Activated CD4-positive, alpha-beta memory T cell treated with anti-CD3 and anti-CD28 coated beads, Interleukin-2, amount 10 ng/mL, durations not matched to agents 7 days and 5 days (primary cell): ENCODE measurements at regions of chr3 and their contacts with region 1.

Region 1: DNA sequence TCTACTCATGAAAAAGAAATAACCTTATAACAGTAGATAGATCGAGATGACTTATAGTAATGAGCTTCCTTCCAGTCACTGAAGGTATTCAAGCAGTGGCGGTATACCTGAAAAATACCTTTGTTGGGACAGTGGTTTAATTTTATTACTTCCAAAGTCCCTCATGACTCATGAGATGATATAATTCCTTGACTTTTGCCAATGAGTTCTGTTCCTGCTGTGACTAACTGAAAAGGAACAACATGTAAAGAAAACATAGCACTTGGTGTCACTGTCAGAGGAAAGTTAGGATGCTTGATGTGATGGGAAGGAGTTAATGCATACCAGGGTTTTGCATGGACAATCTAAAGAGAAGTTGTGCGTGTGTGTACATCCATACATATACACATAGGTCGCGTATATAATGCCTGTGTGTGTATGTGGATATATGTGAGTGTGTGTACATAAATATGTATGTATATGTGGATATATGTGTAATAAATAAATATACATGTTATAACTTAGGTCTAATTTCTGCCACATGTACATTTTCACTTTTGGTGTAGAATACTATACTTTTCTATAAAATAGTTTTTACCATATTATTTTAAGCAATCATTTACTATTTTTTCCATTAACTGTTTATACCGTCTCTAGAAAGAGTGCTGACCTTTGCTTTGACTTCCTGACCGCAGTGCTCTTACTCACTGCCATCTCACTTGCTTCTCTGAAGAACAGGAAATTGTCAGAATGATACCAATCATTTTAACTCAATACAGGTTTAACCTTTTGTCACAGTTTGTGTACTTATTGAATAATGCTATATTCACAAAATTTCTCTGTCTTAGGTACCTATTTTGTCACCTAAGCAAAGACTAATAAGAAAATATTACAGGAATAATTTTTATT is 12.6 kb upstream of the PAK2 start:
- DNase-seq: peak; percentile 51
- H3K4me3 Mint-ChIP-seq: no peak overlapping the region
- H3K27ac Mint-ChIP-seq: peak overlapping the region; percentile 74
- H3K4me1 Mint-ChIP-seq: peaks cover 37% of the 10 kb centered on the region
- H3K27me3 Mint-ChIP-seq: no peaks in the 10 kb centered on the region

Region 2: DNA sequence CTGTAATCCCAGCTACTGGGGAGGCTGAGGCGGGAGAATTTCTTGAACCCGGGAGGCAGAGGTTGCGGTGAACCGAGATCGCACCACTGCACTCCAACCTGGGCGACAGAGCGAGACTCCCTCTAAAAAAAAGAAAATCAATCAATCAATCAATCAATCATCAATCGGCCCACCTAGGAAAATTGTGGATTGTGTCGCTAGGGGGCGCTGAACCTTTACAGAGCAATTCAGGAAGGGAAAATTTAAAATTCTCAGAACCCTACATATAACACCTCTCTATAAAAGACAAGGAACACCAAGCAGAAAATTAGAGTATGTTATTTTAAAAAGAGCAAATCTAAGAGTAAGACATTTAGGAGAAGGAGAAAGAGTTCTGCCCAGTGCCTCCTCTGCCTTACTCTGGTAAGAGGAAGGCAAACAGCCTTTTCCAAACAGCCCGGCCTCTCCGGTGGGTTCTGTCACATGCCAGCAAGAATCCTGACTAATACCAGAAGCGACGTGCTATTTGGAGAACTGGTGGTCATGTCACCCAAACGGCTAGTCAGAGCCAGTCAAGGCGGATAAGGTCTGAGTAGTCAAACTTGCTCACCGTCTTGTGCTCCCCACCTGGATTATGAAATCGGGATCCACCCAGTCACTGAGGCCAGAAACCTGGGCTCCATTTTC is 189.6 kb before region 1 on chr3:
- CTCF ChIA-PET with region 1: no interaction called
- POLR2A ChIA-PET with region 1: no interaction called
- DNase-seq: peak; percentile 74
- H3K4me3 Mint-ChIP-seq: no peak overlapping the region
- H3K27ac Mint-ChIP-seq: no peak overlapping the region
- H3K4me1 Mint-ChIP-seq: peaks cover 9% of the 10 kb centered on the region
- H3K27me3 Mint-ChIP-seq: peaks cover 3% of the 10 kb centered on the region

Region 3: DNA sequence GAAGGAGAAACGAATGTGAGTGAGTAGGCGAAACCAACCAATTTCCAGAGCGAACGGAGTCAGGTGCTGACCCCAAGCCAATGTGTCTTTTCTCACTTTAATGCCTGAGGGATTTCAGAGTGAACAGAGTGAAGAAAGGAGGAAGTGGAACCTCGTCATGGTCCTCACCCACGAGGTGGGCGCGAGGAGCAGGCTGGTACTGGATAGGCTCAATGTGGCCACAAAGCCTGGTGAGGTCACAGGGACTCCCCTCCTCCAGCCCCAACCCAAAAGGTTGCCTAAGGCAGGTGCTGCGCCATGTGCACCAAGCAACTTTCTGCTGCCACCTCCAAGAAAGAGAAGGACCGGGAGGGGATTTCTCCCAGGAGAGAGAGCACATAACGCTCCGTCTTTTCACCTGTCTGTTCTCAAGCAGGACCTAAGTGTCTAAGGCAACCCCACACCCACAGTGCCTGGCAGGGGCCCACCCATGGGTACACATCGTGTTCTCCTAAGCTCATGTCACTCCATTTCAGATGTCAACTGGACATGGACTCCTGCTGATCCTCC is 83.8 kb before region 1 on chr3:
- CTCF ChIA-PET with region 1: no interaction called
- POLR2A ChIA-PET with region 1: no interaction called
- DNase-seq: no peak
- H3K4me3 Mint-ChIP-seq: peak overlapping the region; percentile 38
- H3K27ac Mint-ChIP-seq: peak overlapping the region; percentile 60
- H3K4me1 Mint-ChIP-seq: peaks cover 73% of the 10 kb centered on the region
- H3K27me3 Mint-ChIP-seq: no peaks in the 10 kb centered on the region

Region 4: DNA sequence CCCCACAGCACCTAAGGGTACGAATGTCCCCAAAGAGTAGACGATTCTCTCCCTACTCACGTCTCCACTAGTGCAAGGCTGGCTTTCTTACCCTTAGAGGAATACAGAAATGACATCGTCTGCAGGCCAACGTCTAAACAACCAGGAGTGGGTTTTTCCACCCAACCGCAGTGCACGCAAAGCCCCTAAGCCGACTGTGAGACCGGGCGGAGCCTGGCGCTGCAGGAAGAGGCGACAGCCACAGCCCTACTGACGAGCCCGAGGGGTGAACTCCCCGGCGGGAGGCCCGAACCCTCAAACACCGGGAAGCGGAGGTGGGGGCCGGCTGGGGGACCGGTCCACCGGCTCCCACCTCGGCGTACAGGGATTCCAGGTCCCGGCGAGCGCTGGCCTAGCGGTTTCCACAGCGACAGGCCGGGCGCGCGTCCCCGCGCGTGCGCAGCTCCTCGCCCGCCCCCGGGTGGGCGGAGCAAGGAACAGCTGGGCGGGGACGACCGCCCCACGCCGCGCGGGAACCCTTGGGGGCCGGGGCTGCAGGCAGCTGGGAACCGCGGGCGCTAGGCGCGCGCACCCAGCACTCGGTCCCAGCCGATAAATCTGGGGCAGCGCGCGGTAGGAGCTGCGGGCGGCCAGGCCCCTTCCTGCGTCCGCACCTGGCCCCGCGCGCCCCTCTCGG is 15.1 kb before region 1 on chr3 and contains the starts of genes CEP19 and PIGX:
- CTCF ChIA-PET with region 1: no interaction called
- POLR2A ChIA-PET with region 1: interaction called, 14 read pairs
- DNase-seq: peak; percentile 91
- H3K4me3 Mint-ChIP-seq: peak within 1 kb of the TSS; percentile 82
- H3K27ac Mint-ChIP-seq: peak within 1 kb of the TSS; percentile 96
- H3K4me1 Mint-ChIP-seq: peaks cover 43% of the 10 kb centered on the region
- H3K27me3 Mint-ChIP-seq: no peaks in the 10 kb centered on the region
- total RNA-seq, gene CEP19: 5.3 to 5.5 TPM
- total RNA-seq, gene PIGX: 47.2 to 50.0 TPM

Region 5: DNA sequence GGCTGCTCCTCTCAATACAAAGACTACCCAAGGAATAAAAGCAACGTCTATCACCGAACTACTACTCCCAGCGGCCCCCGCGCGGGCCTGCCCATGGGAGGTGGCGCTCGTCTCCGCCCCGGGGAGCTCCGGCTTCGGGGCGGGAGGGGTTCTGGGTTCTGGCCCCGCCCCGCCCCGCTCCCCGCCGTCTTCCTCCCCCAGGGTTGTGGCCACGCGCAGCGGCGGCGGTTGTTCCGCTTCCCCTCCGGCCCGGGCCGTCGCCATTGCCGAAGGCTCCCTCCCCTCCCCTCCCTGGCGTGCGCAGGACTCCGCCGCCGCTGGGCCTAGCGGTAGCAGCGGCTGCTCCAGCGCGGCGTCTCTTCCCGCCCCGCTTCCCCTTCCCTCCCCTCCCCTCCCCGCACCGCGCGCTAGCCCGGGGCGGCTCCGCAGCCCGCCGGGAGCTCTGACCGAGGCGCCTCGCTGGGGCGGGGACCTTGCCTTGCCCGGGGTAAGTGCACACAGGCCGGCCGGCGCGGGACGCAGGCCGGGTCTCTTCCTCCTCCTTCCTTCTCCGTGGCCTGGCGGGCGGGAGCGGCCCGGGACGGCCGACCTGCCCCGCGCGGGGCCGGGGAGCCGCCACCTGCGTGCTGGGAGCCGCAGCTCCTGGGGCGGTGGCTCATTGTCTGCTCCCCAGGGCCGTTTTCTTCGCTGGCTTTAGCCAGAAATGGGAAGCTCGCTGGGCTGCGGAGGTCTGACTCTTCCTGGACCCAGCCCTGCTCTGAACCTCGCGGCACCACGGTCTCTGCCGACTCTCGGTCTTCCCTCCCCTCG is 12.8 kb after region 1 on chr3 and contains the start of gene PAK2:
- CTCF ChIA-PET with region 1: no interaction called
- POLR2A ChIA-PET with region 1: interaction called, 20 read pairs
- DNase-seq: peak; percentile 91
- H3K4me3 Mint-ChIP-seq: peak within 1 kb of the TSS; percentile 99
- H3K27ac Mint-ChIP-seq: peak within 1 kb of the TSS; percentile 98
- H3K4me1 Mint-ChIP-seq: peaks cover 28% of the 10 kb centered on the region
- H3K27me3 Mint-ChIP-seq: no peaks in the 10 kb centered on the region
- total RNA-seq, gene PAK2: 118 to 119 TPM